ENCODE measurements at regions of chr6 and their contacts with region 1.

Region 1: DNA sequence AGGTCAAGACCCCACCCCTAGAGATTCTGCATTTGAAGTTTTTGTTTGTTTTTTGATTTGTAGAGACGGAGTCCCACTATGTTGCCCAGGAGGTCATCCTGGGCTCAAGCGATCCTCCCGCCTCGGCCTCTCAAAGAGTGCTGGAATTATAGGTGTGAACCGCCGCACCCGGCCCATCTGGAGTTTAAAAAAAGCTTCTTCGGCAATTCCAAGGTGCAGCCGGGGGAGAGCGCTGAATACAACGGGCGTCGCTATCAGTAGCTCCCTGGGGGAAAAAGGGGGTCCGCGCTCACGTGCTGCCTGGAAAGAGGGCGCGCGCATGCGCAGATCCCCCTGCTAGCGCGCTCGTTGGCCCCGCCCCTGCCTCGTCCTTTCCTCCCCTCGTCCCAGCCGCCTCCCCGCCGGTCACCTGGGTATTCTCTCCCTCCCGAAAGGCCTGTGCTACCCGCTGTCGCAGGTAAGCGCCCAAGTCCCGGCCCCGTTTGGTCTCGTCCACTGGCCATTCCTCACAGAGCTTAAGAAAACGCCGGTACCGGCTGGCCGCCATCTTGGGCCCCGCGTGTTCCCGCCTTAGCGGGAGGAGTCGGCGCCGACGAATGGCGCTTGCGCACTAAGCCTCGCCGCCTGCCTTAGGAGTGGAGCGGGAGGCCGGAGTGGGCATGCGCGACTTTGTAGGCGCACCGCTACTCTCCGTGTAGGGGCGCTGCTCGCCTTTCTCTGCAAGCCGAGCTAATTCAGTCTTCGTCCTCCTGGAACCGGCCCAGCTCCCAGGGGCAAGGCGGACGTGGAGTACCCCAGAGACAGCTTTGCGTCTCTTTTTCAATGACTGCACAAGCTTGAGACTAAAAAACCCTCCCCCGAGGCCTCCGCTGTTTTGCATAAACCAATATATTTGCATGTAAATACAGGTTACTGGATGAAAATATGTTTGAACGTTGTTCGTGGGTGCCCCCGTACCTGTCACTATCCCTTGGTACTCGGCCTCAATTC is at the start of gene UQCC2:
- DNase-seq: peak; percentile 93 to 99 (median 97)
- ATAC-seq: peak; percentile 96
- H3K4me3 ChIP-seq: peak within 1 kb of the TSS; percentile 79 to 96
- H3K4me3 Mint-ChIP-seq: peak within 1 kb of the TSS; percentile 98
- H3K27ac ChIP-seq: peak within 1 kb of the TSS; percentile 71 to 88
- H3K27ac Mint-ChIP-seq: peak within 1 kb of the TSS; percentile 96
- H3K4me1 ChIP-seq: peaks cover 19% of the 10 kb centered on the region
- H3K4me1 Mint-ChIP-seq: peaks cover 36% of the 10 kb centered on the region
- H3K27me3 ChIP-seq: no peaks in the 10 kb centered on the region
- H3K27me3 Mint-ChIP-seq: no peaks in the 10 kb centered on the region
- CTCF ChIP-seq: peak; percentile 59
- total RNA-seq, gene UQCC2: 6.2 to 6.8 TPM

Region 2: DNA sequence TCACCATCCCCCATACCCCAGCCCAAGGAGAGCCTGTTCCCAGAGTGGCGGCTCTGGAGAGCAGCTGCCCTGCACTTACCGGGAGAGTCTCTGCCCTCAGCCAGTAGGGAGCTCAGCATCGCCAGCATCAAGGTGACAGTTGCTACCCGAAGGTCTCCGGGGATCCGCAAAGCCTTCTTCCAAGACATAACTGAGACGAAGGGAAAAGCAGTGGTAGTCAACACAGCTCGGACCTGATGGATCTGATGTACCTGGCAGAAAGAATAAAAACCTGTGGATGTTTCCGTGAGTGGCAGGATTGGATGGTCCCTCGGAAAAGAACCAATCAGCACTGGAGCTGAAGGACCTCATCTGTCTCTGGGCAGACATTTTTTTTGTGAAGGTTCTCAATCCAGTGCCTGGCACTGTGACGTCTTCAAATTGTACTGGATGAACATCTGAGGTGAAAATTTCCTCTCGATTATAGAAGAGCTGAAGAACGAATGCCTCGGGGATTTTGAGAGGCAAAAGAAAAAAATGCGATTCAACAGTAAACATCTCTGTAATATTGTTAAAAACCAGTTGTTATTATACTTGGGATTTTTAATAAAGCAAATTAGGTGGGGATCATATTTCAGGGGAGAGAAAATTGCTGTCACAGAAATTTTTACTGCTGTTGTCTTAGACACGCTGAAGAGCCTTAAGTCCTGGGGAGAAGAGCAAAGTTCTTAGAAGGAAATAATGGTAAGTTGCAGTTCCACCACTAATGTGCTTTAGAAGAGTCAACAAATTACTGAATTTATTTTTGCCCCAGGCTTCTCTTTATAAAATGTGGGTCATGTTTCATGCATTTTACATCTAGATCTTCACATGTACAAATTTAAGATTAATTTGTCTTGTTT is 1044.8 kb before region 1 on chr6 and contains the start of gene HLA-DQB1:
- CTCF ChIA-PET with region 1: no interaction called
- POLR2A ChIA-PET with region 1: no interaction called
- intact Hi-C with region 1: loop called in 1 of 2 experiments (anchors 5 kb)
- DNase-seq: peak in 8 of 9 experiments; percentile 26 to 80 (median 58)
- ATAC-seq: peak; percentile 80
- H3K4me3 ChIP-seq: peak within 1 kb of the TSS; percentile 48 to 49
- H3K4me3 Mint-ChIP-seq: peak within 1 kb of the TSS; percentile 83
- H3K27ac ChIP-seq: peak within 1 kb of the TSS; percentile 37 to 39
- H3K27ac Mint-ChIP-seq: peak within 1 kb of the TSS; percentile 62
- H3K4me1 ChIP-seq: peaks cover 23% of the 10 kb centered on the region
- H3K4me1 Mint-ChIP-seq: peaks cover 44% of the 10 kb centered on the region
- H3K27me3 ChIP-seq: no peaks in the 10 kb centered on the region
- H3K27me3 Mint-ChIP-seq: peaks cover 28% of the 10 kb centered on the region
- CTCF ChIP-seq: no peak
- total RNA-seq, gene HLA-DQB1: 27.5 to 30.6 TPM

Region 3: DNA sequence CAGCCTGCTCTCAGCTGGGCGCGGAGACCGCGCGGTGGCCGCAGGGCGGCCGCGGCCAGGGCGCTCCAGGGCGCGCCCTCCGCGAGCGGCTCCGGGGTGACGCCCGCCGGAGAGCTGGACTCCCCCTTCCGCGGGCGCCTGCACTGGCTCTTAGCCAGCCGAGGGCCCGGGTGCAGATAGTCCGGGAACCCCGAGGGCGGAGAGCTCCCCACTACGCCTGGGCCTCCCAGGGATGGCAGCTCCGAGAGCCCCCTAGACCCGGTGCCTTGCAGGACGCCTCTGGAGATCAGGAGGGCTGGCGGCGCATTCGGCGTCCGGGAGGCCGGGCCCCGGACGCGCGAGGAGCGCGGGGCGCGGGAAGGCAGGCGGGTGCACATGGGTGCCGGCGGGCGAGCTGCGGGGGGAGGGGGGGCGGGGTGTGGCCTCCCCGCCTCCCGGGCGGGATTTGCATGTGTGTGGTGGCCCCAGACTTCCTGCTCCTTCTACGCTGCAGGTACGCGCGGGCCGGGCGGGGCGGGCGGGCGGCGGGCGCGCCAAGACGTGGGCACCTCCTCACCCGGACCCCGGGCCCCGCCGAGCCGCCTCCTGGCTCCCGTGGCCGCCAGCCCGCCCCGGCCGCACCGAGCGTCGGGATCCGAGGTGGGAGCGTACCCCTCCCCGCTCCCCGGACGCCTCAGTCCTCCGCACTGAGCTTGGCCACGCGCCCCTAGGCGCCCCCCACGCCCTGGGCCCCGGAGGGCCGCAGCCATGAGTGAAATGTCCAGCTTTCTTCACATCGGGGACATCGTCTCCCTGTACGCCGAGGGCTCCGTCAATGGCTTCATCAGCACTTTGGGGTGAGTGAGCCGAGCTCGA is 90.4 kb before region 1 on chr6 and contains the start of gene ITPR3:
- CTCF ChIA-PET with region 1: interaction called, 7 read pairs
- POLR2A ChIA-PET with region 1: no interaction called
- intact Hi-C with region 1: loop called in 1 of 2 experiments (anchors 1 kb)
- DNase-seq: peak; percentile 55 to 92 (median 72)
- ATAC-seq: peak; percentile 84
- H3K4me3 ChIP-seq: peak within 1 kb of the TSS; percentile 79 to 95
- H3K4me3 Mint-ChIP-seq: peak within 1 kb of the TSS; percentile 90
- H3K27ac ChIP-seq: peak within 1 kb of the TSS; percentile 78 to 86
- H3K27ac Mint-ChIP-seq: peak within 1 kb of the TSS; percentile 91
- H3K4me1 ChIP-seq: peaks cover 38% of the 10 kb centered on the region
- H3K4me1 Mint-ChIP-seq: peaks cover 66% of the 10 kb centered on the region
- H3K27me3 ChIP-seq: no peaks in the 10 kb centered on the region
- H3K27me3 Mint-ChIP-seq: no peaks in the 10 kb centered on the region
- CTCF ChIP-seq: no peak
- total RNA-seq, gene ITPR3: 39.5 to 40.1 TPM

Region 4: GRCh38 chr6:33672808-33673207 is 38.6 kb before region 1 on chr6:
- CTCF ChIA-PET with region 1: no interaction called
- POLR2A ChIA-PET with region 1: no interaction called
- intact Hi-C with region 1: no loop called
- DNase-seq: no peak
- ATAC-seq: no peak
- H3K4me3 ChIP-seq: no peak overlapping the region
- H3K4me3 Mint-ChIP-seq: no peak overlapping the region
- H3K27ac ChIP-seq: no peak overlapping the region
- H3K27ac Mint-ChIP-seq: no peak overlapping the region
- H3K4me1 ChIP-seq: no peaks in the 10 kb centered on the region
- H3K4me1 Mint-ChIP-seq: no peaks in the 10 kb centered on the region
- H3K27me3 ChIP-seq: no peaks in the 10 kb centered on the region
- H3K27me3 Mint-ChIP-seq: no peaks in the 10 kb centered on the region
- CTCF ChIP-seq: no peak

Region 5: GRCh38 chr6:33686981-33687975 is 24.2 kb before region 1 on chr6:
- CTCF ChIA-PET with region 1: no interaction called
- POLR2A ChIA-PET with region 1: no interaction called
- intact Hi-C with region 1: no loop called
- DNase-seq: no peak
- ATAC-seq: no peak
- H3K4me3 ChIP-seq: no peak overlapping the region
- H3K4me3 Mint-ChIP-seq: no peak overlapping the region
- H3K27ac ChIP-seq: no peak overlapping the region
- H3K27ac Mint-ChIP-seq: no peak overlapping the region
- H3K4me1 ChIP-seq: peaks cover 15% of the 10 kb centered on the region
- H3K4me1 Mint-ChIP-seq: peaks cover 21% of the 10 kb centered on the region
- H3K27me3 ChIP-seq: no peaks in the 10 kb centered on the region
- H3K27me3 Mint-ChIP-seq: no peaks in the 10 kb centered on the region
- CTCF ChIP-seq: no peak

Region 6: GRCh38 chr6:33700391-33701050 is 10.9 kb before region 1 on chr6:
- CTCF ChIA-PET with region 1: interaction called, 26 read pairs
- POLR2A ChIA-PET with region 1: interaction called, 8 read pairs
- intact Hi-C with region 1: loop called in 1 of 2 experiments (anchors 2 kb)
- DNase-seq: peak; percentile 46 to 84 (median 78)
- ATAC-seq: peak; percentile 71
- H3K4me3 ChIP-seq: no peak overlapping the region
- H3K4me3 Mint-ChIP-seq: no peak overlapping the region
- H3K27ac ChIP-seq: peak overlapping the region in 1 of 2 experiments; percentile 48
- H3K27ac Mint-ChIP-seq: peak overlapping the region; percentile 60
- H3K4me1 ChIP-seq: peaks cover 31% of the 10 kb centered on the region
- H3K4me1 Mint-ChIP-seq: peaks cover 35% of the 10 kb centered on the region
- H3K27me3 ChIP-seq: no peaks in the 10 kb centered on the region
- H3K27me3 Mint-ChIP-seq: no peaks in the 10 kb centered on the region
- CTCF ChIP-seq: peak; percentile 63

Region 7: GRCh38 chr6:33744001-33744848 is 32.8 kb after region 1 on chr6:
- CTCF ChIA-PET with region 1: interaction called, 29 read pairs
- POLR2A ChIA-PET with region 1: no interaction called
- intact Hi-C with region 1: loop called (anchors 1 kb)
- DNase-seq: peak; percentile 47 to 83 (median 76)
- ATAC-seq: peak; percentile 95
- H3K4me3 ChIP-seq: no peak overlapping the region
- H3K4me3 Mint-ChIP-seq: no peak overlapping the region
- H3K27ac ChIP-seq: no peak overlapping the region
- H3K27ac Mint-ChIP-seq: no peak overlapping the region
- H3K4me1 ChIP-seq: no peaks in the 10 kb centered on the region
- H3K4me1 Mint-ChIP-seq: peaks cover 3% of the 10 kb centered on the region
- H3K27me3 ChIP-seq: no peaks in the 10 kb centered on the region
- H3K27me3 Mint-ChIP-seq: peaks cover 4% of the 10 kb centered on the region
- CTCF ChIP-seq: peak; percentile 67

Region 8: DNA sequence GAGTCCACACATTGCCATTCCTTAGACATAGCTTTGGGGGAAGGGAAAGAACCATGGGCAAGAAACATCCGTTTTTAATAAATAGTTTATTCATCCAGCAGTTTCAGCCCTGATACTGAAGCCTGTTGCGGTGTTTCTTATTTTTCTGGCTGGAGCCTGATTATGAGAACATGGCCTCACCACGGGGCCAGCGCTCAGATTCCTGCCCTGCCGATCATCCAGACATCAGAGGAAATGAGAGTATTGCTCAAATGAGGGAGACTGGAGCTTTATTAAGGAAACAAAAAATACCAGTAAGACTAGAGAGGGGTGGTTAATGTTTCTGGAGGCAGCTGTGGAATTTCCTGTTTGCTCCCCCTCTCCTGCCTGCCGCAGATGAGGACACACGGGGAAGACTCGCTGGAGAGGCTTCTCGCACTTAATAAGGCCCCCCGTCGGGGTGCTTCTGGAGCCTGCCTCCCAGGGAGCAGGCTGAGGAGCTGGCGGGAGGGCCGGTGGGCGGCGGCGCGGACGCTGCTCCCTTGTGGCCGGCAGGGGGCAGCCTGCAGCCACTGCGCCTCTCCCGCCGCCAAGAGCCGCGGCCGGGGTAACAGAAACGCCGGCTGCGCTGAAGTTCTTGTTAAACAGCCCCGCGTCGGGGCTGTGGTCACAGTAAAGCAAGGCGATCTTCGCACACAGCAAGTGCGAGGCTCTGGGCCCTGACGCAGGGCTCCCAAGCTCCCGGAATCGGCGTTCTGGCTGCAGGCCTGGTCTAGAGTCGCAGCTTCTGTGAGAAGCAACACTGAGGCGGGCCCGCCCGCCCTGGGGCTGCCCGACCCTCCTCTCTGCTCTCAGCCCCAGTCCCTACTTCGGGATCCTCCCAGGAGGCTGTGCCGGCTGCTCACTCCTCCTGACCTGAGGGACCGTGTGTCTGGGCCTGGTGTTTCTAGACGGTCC is 60.0 kb after region 1 on chr6:
- CTCF ChIA-PET with region 1: interaction called, 15 read pairs
- POLR2A ChIA-PET with region 1: no interaction called
- intact Hi-C with region 1: no loop called
- DNase-seq: peak; percentile 27 to 81 (median 65)
- ATAC-seq: peak; percentile 82
- H3K4me3 ChIP-seq: no peak overlapping the region
- H3K4me3 Mint-ChIP-seq: no peak overlapping the region
- H3K27ac ChIP-seq: no peak overlapping the region
- H3K27ac Mint-ChIP-seq: peak overlapping the region; percentile 58
- H3K4me1 ChIP-seq: no peaks in the 10 kb centered on the region
- H3K4me1 Mint-ChIP-seq: peaks cover 9% of the 10 kb centered on the region
- H3K27me3 ChIP-seq: no peaks in the 10 kb centered on the region
- H3K27me3 Mint-ChIP-seq: peaks cover 9% of the 10 kb centered on the region
- CTCF ChIP-seq: peak; percentile 95

Region 9: DNA sequence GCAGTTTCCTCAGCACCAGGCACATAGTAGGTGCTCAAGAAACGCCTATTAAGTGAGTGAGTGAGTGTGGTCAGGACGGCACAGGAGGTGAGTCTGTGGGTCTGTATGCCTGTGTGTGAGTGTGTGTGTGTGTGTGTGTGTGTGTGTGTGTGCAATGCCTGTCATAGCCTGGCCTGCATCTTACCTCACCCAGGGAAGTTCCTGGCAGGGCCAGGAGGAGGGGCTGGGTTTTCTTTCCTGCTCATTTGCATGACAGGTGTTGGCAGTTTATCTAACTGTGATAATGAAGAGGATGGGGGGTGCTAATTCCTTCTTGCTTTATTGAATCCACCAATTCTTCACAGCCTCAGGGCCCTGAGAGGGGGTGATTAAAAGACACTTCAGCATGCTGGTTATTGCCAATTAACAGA is 239.0 kb after region 1 on chr6:
- CTCF ChIA-PET with region 1: no interaction called
- POLR2A ChIA-PET with region 1: no interaction called
- intact Hi-C with region 1: no loop called
- DNase-seq: no peak
- ATAC-seq: no peak
- H3K4me3 ChIP-seq: no peak overlapping the region
- H3K4me3 Mint-ChIP-seq: no peak overlapping the region
- H3K27ac ChIP-seq: no peak overlapping the region
- H3K27ac Mint-ChIP-seq: no peak overlapping the region
- H3K4me1 ChIP-seq: no peaks in the 10 kb centered on the region
- H3K4me1 Mint-ChIP-seq: peaks cover 3% of the 10 kb centered on the region
- H3K27me3 ChIP-seq: no peaks in the 10 kb centered on the region
- H3K27me3 Mint-ChIP-seq: no peaks in the 10 kb centered on the region
- CTCF ChIP-seq: no peak

Region 10: DNA sequence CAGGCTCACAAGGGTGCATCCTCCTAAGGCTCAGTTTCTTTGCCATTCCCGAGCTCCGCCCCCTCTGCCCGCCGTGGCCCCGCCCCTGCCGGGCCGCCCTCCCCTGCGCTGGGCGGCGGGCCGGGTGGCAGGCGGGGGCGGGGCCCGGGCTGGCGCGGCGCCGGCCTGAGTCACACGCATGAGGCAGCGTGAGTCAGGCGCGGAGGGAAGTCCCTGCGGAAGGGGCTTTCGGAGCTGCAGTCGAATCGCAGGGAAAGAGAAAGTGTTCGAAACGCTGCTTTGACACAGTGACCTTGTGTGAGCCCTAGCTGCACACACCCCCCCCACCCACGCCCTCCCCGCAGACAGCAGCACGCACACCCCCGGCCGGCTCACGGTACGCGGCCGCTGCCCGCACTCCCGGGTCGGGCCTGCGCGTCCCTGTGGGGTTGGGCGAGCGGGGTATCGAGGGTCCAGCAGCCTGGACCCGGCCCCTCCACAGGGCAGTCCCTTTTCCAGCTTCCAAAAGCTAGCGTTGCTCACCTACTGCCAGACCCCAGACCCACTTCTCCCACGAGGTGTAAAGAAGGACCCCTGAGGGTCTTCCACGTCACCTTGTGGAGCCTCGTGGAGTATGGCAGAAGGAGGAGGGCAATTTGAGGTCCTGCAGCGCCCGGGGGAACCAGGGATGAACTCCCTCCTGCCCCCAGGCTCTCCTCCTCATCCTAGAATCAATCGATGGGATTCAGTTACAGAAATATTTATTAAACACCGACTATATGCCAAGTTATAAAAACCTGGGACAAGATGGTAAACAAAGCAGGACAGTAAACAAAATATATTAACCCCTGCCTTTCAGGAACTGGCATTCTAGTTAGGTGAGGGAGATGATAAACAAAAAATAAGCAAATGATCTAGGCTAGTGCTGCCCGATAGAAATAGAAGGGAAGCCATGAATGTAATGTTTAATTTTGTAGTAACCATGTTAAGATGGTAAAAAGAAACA is 512.8 kb after region 1 on chr6:
- CTCF ChIA-PET with region 1: no interaction called
- POLR2A ChIA-PET with region 1: no interaction called
- intact Hi-C with region 1: loop called in 1 of 2 experiments (anchors 5 kb)
- DNase-seq: peak; percentile 88 to 99 (median 94)
- ATAC-seq: peak; percentile 98
- H3K4me3 ChIP-seq: peak overlapping the region; percentile 51 to 86
- H3K4me3 Mint-ChIP-seq: peak overlapping the region; percentile 70
- H3K27ac ChIP-seq: peak overlapping the region; percentile 76 to 87
- H3K27ac Mint-ChIP-seq: peak overlapping the region; percentile 89
- H3K4me1 ChIP-seq: peaks cover 14% of the 10 kb centered on the region
- H3K4me1 Mint-ChIP-seq: peaks cover 20% of the 10 kb centered on the region
- H3K27me3 ChIP-seq: no peaks in the 10 kb centered on the region
- H3K27me3 Mint-ChIP-seq: no peaks in the 10 kb centered on the region
- CTCF ChIP-seq: no peak